H1 (cell line): ENCODE measurements at regions of chr4 and their contacts with region 1.

Region 1: GRCh38 chr4:88725986-88726385 is 28.4 kb upstream of the NAP1L5 start:
- DNase-seq: no peak
- H3K4me3 ChIP-seq: no peak overlapping the region
- H3K27ac ChIP-seq: no peak overlapping the region
- H3K4me1 ChIP-seq: peaks cover 0 to 4% (median 1%) of the 10 kb centered on the region in 4 experiments; a peak in 2 of 7 replicates
- H3K27me3 ChIP-seq: no peaks in the 10 kb centered on the region
- CTCF ChIP-seq: no peak
- EP300 ChIP-seq: no peak
- POLR2A ChIP-seq: no peak
- RAD21 ChIP-seq: no peak

Region 2: DNA sequence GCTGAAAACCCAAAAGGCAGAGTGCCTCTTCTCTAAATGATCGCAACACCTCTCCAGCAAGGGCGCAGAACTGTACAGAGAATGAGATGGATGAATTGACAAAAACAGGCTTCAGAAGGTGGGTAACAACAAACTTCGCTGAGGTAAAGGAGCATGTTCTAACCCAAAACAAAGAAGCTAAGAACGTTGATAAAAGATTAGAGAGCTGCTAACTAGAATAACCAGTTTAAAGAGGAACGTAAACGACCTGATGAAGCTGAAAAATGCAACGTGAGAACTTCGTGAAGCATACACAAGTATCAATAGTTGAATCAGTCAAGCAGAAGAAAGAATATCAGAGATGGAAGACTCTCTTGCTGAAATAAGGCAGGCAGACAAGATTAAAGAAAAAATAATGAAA is 90.9 kb before region 1 on chr4:
- CTCF ChIA-PET with region 1: no interaction called
- POLR2A ChIA-PET with region 1: no interaction called
- DNase-seq: no peak
- H3K4me3 ChIP-seq: no peak overlapping the region
- H3K27ac ChIP-seq: no peak overlapping the region
- H3K4me1 ChIP-seq: no peaks in the 10 kb centered on the region; a peak in 1 of 7 replicates
- H3K27me3 ChIP-seq: no peaks in the 10 kb centered on the region
- CTCF ChIP-seq: no peak
- EP300 ChIP-seq: no peak
- POLR2A ChIP-seq: no peak
- RAD21 ChIP-seq: no peak

Region 3: DNA sequence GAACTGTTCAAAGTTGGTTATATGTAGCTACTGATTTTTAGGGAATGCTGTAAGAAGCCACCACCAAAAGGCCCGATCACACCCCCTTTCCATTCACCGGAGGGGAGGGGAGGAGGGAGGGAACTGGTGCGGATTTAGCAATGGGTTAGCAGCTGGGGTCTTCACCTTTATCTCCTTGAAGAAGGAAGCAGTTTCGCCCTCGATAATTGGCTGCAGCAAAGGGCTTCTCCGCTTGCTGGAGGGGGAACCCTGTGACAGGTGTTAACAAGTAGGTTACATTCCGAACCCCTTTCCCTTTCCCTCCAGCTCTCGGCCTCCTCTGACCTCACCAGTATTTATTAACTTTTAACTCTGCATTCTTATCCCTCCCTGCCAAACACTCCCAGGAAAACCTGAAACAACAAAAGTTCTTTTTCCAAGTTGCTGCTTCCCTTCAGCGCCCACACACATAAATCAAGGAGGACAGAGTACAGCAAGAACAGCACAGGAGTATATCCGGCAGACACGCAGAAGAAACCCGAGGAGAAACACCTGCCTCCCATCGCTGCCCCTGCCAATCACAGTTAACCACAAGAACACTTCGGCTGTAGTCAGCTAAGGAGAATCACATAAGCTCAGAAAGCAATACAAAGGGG is 11.4 kb after region 1 on chr4:
- CTCF ChIA-PET with region 1: interaction called, 6 read pairs
- POLR2A ChIA-PET with region 1: interaction called, 20 read pairs
- DNase-seq: no peak
- H3K4me3 ChIP-seq: no peak overlapping the region
- H3K27ac ChIP-seq: no peak overlapping the region
- H3K4me1 ChIP-seq: peaks cover 6 to 28% (median 11%) of the 10 kb centered on the region in 4 experiments; a peak in 6 of 7 replicates
- H3K27me3 ChIP-seq: no peaks in the 10 kb centered on the region
- CTCF ChIP-seq: no peak
- EP300 ChIP-seq: no peak
- POLR2A ChIP-seq: no peak
- RAD21 ChIP-seq: no peak

Region 4: DNA sequence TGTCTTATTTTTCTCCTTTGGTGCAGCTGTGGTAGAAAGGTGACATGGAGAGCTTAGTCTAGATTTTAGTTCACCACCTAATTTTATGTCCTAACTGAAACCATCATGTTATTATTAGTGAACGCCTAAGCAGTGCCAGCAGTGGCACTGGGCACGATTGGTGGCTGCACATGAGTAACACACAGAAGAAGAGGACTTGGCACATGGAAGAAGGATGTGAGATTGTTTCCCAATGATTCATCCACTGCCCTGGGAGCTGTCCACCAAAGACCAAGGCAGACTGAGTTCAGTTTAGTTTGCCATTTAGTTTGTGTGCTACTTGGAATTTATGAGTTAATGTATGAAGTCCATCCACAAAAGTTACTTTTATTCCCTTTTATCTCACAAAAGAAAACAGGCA is 39.7 kb after region 1 on chr4:
- CTCF ChIA-PET with region 1: no interaction called
- POLR2A ChIA-PET with region 1: no interaction called
- DNase-seq: no peak
- H3K4me3 ChIP-seq: no peak overlapping the region
- H3K27ac ChIP-seq: no peak overlapping the region
- H3K4me1 ChIP-seq: no peaks in the 10 kb centered on the region
- H3K27me3 ChIP-seq: no peaks in the 10 kb centered on the region
- CTCF ChIP-seq: no peak
- EP300 ChIP-seq: no peak
- POLR2A ChIP-seq: no peak
- RAD21 ChIP-seq: no peak